ENCODE measurements at regions of chr3 and their contacts with region 1.

Region 1: DNA sequence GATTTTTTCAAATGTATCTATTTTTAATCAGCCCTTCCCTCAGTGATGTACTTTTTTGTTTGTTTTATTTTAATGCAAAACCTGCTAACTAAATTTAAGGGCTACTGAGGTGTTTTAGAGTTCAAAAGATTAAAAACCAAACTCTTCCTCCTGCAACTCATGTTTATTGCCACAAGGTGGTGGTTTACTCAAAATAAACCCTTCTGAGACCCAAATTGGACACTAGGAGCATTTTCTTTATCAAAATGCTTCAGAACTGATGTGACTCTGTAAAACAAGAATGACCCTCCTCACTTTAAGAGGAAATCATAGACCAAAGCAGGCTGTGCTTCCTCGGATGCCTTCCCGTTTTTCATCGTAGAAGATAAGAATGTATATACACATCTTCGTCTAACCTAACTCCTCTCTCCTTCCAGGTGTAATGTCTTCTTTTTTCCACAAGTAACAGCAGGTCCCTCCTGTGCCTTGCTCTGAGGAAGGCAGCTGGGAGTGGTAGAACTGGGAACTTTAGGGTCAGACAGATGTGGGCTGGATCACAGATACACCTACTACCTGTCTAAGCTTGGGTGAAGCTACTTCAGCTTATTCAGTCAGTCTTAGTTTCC is 2.9 kb upstream of the NME9 start:
- DNase-seq: no peak
- H3K4me3 ChIP-seq: no peak overlapping the region
- H3K27ac ChIP-seq: no peak overlapping the region
- H3K4me1 ChIP-seq: peaks cover 25% of the 10 kb centered on the region
- H3K27me3 ChIP-seq: no peaks in the 10 kb centered on the region
- CTCF ChIP-seq: peak; percentile 75

Region 2: GRCh38 chr3:138417559-138417982 is 85.0 kb after region 1 on chr3:
- intact Hi-C with region 1: loop called (anchors 10 kb)
- DNase-seq: peak; percentile 73
- H3K4me3 ChIP-seq: no peak overlapping the region
- H3K27ac ChIP-seq: no peak overlapping the region
- H3K4me1 ChIP-seq: peaks cover 22% of the 10 kb centered on the region
- H3K27me3 ChIP-seq: no peaks in the 10 kb centered on the region
- CTCF ChIP-seq: peak; percentile 98